IMR-90 (cell line): ENCODE measurements at regions of chr6 and their contacts with region 1.

Region 1: DNA sequence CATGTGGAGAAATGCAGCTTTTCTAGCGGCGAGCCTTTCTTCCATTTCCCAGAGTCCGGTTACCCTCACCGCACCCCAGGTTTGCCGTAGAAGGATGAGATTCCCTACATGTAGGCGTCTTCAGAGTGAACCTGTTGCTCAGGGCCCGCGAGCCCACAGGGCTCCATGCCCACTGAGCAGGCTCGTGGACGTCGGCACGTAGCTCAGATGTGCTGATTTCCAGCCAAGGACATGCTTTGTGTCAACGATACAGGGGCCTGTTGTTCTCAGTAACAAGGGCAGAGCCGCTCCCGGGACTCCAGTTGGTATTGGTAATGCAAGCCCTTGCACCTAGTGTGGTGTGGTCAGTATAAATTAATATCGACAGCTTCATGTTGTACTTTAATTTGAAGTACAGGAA is 159.6 kb downstream of the MTHFD1L start:
- DNase-seq: no peak
- ATAC-seq: no peak
- H3K4me3 ChIP-seq: no peak overlapping the region
- H3K27ac ChIP-seq: no peak overlapping the region
- H3K4me1 ChIP-seq: peaks cover 9% of the 10 kb centered on the region
- H3K27me3 ChIP-seq: no peaks in the 10 kb centered on the region
- CTCF ChIP-seq: no peak
- POLR2A ChIP-seq: no peak
- RAD21 ChIP-seq: no peak

Region 2: GRCh38 chr6:150590448-150590847 is 434.6 kb before region 1 on chr6:
- CTCF ChIA-PET with region 1: no interaction called
- POLR2A ChIA-PET with region 1: no interaction called
- dilution Hi-C with region 1: no loop called
- in situ Hi-C with region 1: no loop called
- intact Hi-C with region 1: no loop called
- DNase-seq: no peak
- ATAC-seq: no peak
- H3K4me3 ChIP-seq: no peak overlapping the region
- H3K27ac ChIP-seq: no peak overlapping the region
- H3K4me1 ChIP-seq: no peaks in the 10 kb centered on the region
- H3K27me3 ChIP-seq: peaks cover 10% of the 10 kb centered on the region
- CTCF ChIP-seq: no peak
- POLR2A ChIP-seq: no peak
- RAD21 ChIP-seq: no peak

Region 3: DNA sequence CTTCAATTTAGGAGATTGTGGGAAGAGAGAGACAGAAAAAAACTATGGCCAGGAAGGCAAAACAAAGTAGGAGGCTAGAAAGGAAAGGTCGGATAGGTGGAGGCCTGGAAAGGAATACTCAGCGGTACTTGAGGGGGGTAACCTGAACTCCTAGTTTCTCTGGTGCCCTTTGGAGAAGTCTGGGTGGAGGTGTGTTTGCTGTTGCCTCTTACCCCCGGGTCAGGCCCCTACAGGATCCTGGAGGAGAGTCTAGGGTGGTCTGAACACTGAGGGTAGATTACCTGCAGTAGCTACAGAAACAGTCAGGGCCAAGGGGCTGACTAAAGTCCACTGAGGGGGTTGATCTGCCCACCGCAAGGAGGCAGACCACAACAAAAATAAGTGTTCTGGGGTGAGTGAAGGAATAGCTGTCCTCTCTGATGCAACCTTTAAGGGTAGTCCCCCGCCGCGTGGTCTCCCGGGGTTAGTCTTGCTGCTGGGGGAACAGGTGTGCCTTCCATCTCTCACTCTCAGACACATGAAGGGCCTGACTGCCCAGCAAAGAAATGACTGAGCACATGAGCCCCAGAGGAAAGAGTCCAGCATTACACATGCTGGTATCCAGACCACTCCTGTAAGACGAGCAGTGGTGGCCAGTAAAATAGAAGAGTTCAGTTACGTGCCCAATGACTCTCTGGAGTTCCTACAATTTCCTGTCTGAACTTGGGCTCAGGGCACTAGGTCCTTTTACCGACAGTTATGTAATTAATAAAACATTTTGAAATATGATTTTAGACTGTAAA is 100.1 kb before region 1 on chr6:
- CTCF ChIA-PET with region 1: no interaction called
- POLR2A ChIA-PET with region 1: no interaction called
- dilution Hi-C with region 1: no loop called
- in situ Hi-C with region 1: no loop called
- intact Hi-C with region 1: no loop called
- DNase-seq: peak; percentile 35
- ATAC-seq: peak; percentile 22; the same call in 1 of the 2 replicates
- H3K4me3 ChIP-seq: no peak overlapping the region
- H3K27ac ChIP-seq: peak overlapping the region; percentile 54; the same call in 1 of the 2 replicates
- H3K4me1 ChIP-seq: peaks cover 26% of the 10 kb centered on the region
- H3K27me3 ChIP-seq: no peaks in the 10 kb centered on the region
- CTCF ChIP-seq: no peak
- POLR2A ChIP-seq: no peak
- RAD21 ChIP-seq: no peak

Region 4: DNA sequence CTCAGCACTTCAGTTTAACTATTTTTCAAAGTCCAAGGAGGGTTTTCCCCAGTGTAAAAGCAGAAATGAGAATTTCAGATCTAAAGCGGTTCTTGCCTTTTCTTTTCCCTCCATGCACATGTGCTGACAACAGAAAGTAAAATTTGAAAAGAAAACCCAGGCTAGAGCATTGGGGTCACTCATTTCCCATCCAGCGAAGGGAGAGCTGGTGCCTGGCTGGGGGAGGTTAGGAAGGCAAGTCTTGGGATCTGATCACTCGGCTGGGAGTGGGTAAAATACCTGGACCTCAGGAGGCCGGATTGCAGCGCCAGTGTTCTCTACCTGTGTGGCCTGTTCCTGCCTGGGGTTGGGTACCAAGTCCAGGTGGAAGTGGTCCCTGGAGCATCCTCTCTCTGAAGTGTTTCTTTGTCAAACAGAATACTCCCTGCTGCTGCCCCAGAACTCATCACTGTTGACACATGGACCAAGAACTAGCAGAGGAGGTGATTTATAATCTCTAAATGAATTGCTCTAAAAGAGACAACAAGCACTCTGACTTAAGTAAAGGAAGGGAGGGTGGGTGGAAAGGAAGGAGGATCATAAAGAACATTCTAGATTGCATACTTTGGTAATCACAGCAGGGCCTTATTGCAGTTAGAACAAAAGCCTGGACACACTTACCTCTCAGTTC is 23.6 kb before region 1 on chr6:
- CTCF ChIA-PET with region 1: no interaction called
- POLR2A ChIA-PET with region 1: interaction called, 20 read pairs
- dilution Hi-C with region 1: no loop called
- in situ Hi-C with region 1: no loop called
- intact Hi-C with region 1: no loop called
- DNase-seq: no peak
- ATAC-seq: no peak
- H3K4me3 ChIP-seq: no peak overlapping the region
- H3K27ac ChIP-seq: peak overlapping the region; percentile 24; the same call in 1 of the 2 replicates
- H3K4me1 ChIP-seq: peaks cover 28% of the 10 kb centered on the region
- H3K27me3 ChIP-seq: no peaks in the 10 kb centered on the region
- CTCF ChIP-seq: no peak
- POLR2A ChIP-seq: no peak
- RAD21 ChIP-seq: no peak